ENCODE measurements at regions of chr1 and their contacts with region 1.

Region 1: DNA sequence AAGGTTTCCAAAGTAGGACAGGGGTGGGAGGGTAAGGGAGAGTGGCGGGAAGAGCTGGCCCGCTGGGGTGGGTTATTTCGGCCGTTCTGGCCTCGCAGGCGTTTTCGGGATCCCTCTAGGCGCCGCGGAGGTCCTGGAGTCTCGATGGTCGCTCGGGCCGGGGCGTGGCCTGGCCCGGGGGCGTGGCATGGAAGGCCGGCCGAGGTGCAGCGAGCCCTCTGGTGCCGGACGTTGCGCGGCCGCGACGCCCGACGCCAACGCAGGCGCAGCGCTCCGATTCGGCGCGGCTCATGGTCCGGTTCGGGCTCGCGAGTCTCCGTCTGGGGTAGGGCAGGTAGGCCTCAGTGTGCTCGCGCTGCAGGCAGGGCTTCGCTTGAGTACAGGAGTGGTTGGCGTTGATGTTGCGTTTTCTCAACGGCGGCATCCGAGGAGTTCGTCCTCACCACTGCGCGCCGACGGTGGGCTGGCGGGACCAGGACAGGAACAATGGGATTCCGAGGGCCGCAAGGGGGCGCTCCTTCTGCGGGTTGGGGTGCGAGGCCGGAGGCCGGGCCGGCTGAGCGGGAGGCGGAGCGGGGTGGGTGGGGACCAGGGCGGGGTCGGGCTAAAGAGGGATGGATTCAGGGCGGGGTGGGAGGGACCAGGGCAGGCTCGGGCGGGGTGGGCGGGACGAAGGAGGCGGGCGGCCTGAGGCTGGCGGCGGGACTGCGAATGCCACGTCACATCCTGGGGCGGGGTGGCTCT is at the start of gene PGBD2:
- DNase-seq: peak; percentile 97
- H3K4me3 Mint-ChIP-seq: peak within 1 kb of the TSS; percentile 75
- H3K27ac Mint-ChIP-seq: peak within 1 kb of the TSS; percentile 85
- H3K4me1 Mint-ChIP-seq: peaks cover 19% of the 10 kb centered on the region
- H3K27me3 Mint-ChIP-seq: peaks cover 3% of the 10 kb centered on the region
- CTCF ChIP-seq: peak; percentile 64
- total RNA-seq, gene PGBD2: 7.3 and 7.8 TPM in 2 replicates

Region 2: DNA sequence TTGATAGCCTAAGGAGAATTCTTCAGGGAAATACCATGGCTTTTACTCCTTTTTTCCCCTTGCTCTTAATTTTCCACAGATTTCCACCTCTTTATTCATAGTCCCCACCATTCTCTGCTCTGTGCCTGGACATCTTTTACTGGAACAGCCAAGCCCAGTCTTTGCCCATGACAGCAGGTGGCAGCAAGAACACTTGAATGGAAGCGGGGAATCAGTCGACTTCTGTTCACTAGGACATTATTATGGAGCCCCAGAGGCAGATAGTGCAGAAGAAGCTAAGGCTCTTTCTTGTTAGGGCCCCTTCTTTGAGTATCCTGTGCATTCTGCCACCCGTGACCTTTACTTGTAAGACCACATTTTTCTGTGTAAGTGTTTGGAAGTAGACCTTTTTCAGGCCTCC is 209.9 kb before region 1 on chr1:
- CTCF ChIA-PET with region 1: no interaction called
- intact Hi-C with region 1: no loop called
- DNase-seq: peak; percentile 43
- H3K4me3 Mint-ChIP-seq: no peak overlapping the region
- H3K27ac Mint-ChIP-seq: no peak overlapping the region
- H3K4me1 Mint-ChIP-seq: no peaks in the 10 kb centered on the region
- H3K27me3 Mint-ChIP-seq: no peaks in the 10 kb centered on the region
- CTCF ChIP-seq: no peak

Region 3: GRCh38 chr1:248739572-248740205 is 166.5 kb before region 1 on chr1:
- CTCF ChIA-PET with region 1: no interaction called
- intact Hi-C with region 1: no loop called
- DNase-seq: no peak
- H3K4me3 Mint-ChIP-seq: no peak overlapping the region
- H3K27ac Mint-ChIP-seq: no peak overlapping the region
- H3K4me1 Mint-ChIP-seq: no peaks in the 10 kb centered on the region
- H3K27me3 Mint-ChIP-seq: no peaks in the 10 kb centered on the region
- CTCF ChIP-seq: no peak

Region 4: GRCh38 chr1:248858891-248859889 is 47.0 kb before region 1 on chr1 and contains the start of gene ZNF692:
- CTCF ChIA-PET with region 1: interaction called, 3 read pairs
- intact Hi-C with region 1: loop called (anchors 1 kb)
- DNase-seq: peak; percentile 97
- H3K4me3 Mint-ChIP-seq: peak within 1 kb of the TSS; percentile 90
- H3K27ac Mint-ChIP-seq: peak within 1 kb of the TSS; percentile 88
- H3K4me1 Mint-ChIP-seq: peaks cover 25% of the 10 kb centered on the region
- H3K27me3 Mint-ChIP-seq: peaks cover 16% of the 10 kb centered on the region
- CTCF ChIP-seq: no peak
- total RNA-seq, gene ZNF692: 61.4 and 61.5 TPM in 2 replicates

Region 5: DNA sequence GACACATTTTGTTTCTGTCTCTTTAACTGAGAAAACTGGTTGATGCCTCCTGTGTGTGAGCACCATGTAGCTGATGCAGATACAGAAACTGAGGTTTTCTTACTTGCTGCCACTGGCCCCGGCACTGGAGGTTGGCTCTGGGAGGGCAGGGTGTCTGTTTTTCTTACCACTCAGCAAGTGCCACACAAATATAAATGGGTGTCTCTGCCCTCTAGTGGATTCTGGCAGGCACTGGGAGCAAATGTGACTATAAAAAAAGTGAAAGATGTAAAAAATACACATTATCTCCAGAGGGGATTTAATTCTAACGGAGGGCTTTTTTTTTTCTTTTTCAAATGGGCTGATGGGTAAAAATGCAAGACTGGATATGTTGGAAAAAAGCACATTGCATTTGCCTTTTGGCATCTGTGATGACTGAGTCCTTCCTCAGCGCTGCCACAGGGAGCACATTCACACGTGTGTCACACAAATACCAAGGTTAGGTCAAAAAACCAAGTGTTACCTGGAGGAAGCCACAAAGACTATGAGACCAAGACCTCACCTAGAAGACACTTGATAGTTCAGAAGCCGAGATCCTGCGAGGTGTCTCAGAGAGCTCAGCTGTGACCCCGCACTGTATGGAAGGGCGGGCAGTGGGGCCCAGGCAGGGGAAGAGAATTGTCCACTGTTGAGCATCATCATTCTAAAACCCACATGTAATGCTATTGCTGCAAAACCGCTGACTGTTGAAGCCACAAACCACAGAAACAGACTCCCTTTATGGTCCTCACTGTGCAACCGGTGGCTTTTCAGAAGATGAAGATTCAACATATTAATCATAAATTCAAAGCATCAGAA is 18.7 kb after region 1 on chr1:
- CTCF ChIA-PET with region 1: no interaction called
- intact Hi-C with region 1: loop called (anchors 1 kb)
- DNase-seq: peak; percentile 56
- H3K4me3 Mint-ChIP-seq: no peak overlapping the region
- H3K27ac Mint-ChIP-seq: no peak overlapping the region
- H3K4me1 Mint-ChIP-seq: peaks cover 35% of the 10 kb centered on the region
- H3K27me3 Mint-ChIP-seq: no peaks in the 10 kb centered on the region
- CTCF ChIP-seq: peak; percentile 54

Measured in Calu3 (cell line).